Activated CD4-positive, alpha-beta T cell treated with anti-CD3 and anti-CD28 coated beads for 36 hours (primary cell): ENCODE measurements at regions of chr7 and their contacts with region 1.

Region 1: GRCh38 chr7:73522105-73522872 is at the start of gene BAZ1B:
- DNase-seq: peak; percentile 99
- ATAC-seq: peak; percentile 95
- H3K4me3 Mint-ChIP-seq: peak within 1 kb of the TSS; percentile 99
- H3K27ac Mint-ChIP-seq: peak within 1 kb of the TSS; percentile 98
- H3K4me1 Mint-ChIP-seq: peaks cover 53% of the 10 kb centered on the region
- H3K27me3 Mint-ChIP-seq: no peaks in the 10 kb centered on the region
- total RNA-seq, gene BAZ1B: 90.2 to 98.6 TPM

Region 2: GRCh38 chr7:72217151-72217550 is 1305.1 kb before region 1 on chr7:
- CTCF ChIA-PET with region 1: no interaction called
- POLR2A ChIA-PET with region 1: no interaction called
- intact Hi-C with region 1: no loop called
- DNase-seq: no peak
- ATAC-seq: no peak
- H3K4me3 Mint-ChIP-seq: no peak overlapping the region
- H3K27ac Mint-ChIP-seq: no peak overlapping the region
- H3K4me1 Mint-ChIP-seq: no peaks in the 10 kb centered on the region
- H3K27me3 Mint-ChIP-seq: no peaks in the 10 kb centered on the region

Region 3: GRCh38 chr7:73433924-73434700 is 88.2 kb before region 1 on chr7:
- CTCF ChIA-PET with region 1: no interaction called
- POLR2A ChIA-PET with region 1: interaction called, 4 read pairs
- intact Hi-C with region 1: loop called in 1 of 2 experiments (anchors 1 kb)
- DNase-seq: peak; percentile 53
- ATAC-seq: peak; percentile 38
- H3K4me3 Mint-ChIP-seq: peak overlapping the region; percentile 23
- H3K27ac Mint-ChIP-seq: no peak overlapping the region
- H3K4me1 Mint-ChIP-seq: no peaks in the 10 kb centered on the region
- H3K27me3 Mint-ChIP-seq: peaks cover 11% of the 10 kb centered on the region

Region 4: GRCh38 chr7:73667344-73668102 is 145.2 kb after region 1 on chr7 and contains the start of gene VPS37D:
- CTCF ChIA-PET with region 1: interaction called, 3 read pairs
- POLR2A ChIA-PET with region 1: no interaction called
- intact Hi-C with region 1: loop called in 1 of 2 experiments (anchors 1 kb)
- DNase-seq: peak; percentile 96
- ATAC-seq: peak; percentile 94
- H3K4me3 Mint-ChIP-seq: peak within 1 kb of the TSS; percentile 57
- H3K27ac Mint-ChIP-seq: no peak within 1 kb of the TSS
- H3K4me1 Mint-ChIP-seq: peaks cover 5% of the 10 kb centered on the region
- H3K27me3 Mint-ChIP-seq: peaks cover 40% of the 10 kb centered on the region
- total RNA-seq, gene VPS37D: 0.35 to 0.39 TPM

Region 5: DNA sequence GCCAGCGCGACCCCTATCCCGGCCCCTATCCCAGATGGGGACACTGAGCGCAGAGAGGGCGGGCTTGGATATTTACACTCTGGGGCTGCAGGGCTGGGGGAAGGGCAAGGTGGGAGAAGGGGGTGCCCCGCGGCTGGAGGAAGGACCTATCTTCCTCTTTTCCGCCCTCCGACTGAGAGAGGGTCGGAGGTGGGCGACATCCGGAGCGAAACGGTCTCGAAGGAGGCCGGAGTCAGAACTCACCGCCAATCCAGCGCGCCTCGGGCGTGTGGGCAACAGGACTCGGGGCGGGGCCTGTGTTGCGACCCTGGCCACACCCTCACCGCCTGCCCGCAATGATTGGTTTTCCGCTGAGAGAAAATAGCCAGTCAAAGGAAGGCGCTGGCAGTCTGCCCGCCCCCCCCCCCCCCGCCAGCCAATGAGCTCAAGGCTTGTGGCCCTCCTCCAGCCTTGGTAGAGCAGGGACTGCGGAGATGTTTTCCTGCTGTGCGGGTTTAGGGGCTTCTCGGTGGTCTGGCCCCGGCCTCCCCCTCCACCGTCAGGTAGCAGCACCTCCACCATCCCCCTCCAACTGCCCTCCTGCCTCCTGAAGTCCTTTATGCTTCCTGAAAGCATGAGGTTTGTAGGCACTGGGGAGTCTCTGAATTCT is 320.1 kb after region 1 on chr7 and contains the start of gene METTL27:
- CTCF ChIA-PET with region 1: no interaction called
- POLR2A ChIA-PET with region 1: no interaction called
- intact Hi-C with region 1: loop called in 1 of 2 experiments (anchors 5 kb)
- DNase-seq: peak; percentile 96
- ATAC-seq: peak; percentile 100
- H3K4me3 Mint-ChIP-seq: peak within 1 kb of the TSS; percentile 75
- H3K27ac Mint-ChIP-seq: peak within 1 kb of the TSS; percentile 69
- H3K4me1 Mint-ChIP-seq: peaks cover 7% of the 10 kb centered on the region
- H3K27me3 Mint-ChIP-seq: no peaks in the 10 kb centered on the region
- total RNA-seq, gene METTL27: 2.1 to 2.2 TPM

Region 6: GRCh38 chr7:74656837-74657691 is 1134.8 kb after region 1 on chr7:
- CTCF ChIA-PET with region 1: no interaction called
- POLR2A ChIA-PET with region 1: interaction called, 4 read pairs
- intact Hi-C with region 1: loop called in 1 of 2 experiments (anchors 5 kb)
- DNase-seq: peak; percentile 100
- ATAC-seq: peak; percentile 82
- H3K4me3 Mint-ChIP-seq: peak overlapping the region; percentile 76
- H3K27ac Mint-ChIP-seq: peak overlapping the region; percentile 92
- H3K4me1 Mint-ChIP-seq: peaks cover 52% of the 10 kb centered on the region
- H3K27me3 Mint-ChIP-seq: no peaks in the 10 kb centered on the region